Dorsolateral prefrontal cortex (tissue), 120 donors: ENCODE measurements at regions of chr1 and their contacts with region 1.

Region 1: DNA sequence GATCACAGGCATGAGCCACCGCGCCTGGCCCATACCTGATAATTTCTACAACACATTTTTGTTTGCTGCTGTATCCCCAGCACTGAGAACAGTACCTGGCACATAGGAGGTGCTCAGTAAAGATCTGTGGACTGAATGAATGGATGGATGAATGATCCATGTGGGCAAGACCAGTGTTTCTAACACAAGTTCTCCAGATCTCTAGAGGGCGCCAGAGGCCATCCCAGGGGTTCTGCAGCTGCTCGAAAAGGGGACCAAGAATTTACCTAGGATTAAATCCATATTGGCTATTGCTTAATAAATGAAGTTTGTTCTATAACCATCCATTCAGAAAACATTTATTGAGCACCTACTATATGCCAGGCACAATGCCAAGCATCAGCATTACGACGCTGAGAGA is 167.7 kb downstream of the ACTL8 start:
- DNase-seq: peak in 8 of 10 donors; percentile 34 to 80 (median 58)
- H3K4me3 ChIP-seq: no peak overlapping the region
- H3K27ac ChIP-seq: no peak overlapping the region
- H3K27me3 ChIP-seq: peaks cover 0 to 45% (median 3%) of the 10 kb centered on the region in 45 donors
- CTCF ChIP-seq: peak in 54 of 56 donors; percentile 30 to 71 (median 55)

Region 2: DNA sequence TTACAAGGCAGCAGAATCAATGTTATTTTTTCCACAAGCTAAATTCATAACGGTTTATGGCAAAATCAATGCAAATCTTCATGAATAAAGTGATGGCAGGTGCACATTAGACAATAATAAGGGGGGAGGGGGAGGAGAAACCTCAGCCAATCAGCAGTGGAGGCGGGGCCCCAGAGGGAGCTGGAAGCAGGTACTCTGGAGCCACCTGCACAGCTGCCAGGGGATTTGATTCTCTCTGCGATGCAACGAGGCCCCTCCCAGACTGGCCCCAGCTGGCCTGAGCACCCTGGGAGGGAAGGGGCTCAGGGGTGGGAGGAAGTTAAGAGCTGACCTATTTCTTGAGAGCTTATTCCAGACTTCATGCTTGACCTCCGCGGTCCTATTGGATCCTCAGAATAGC is 57.0 kb after region 1 on chr1:
- intact Hi-C with region 1: no loop called
- DNase-seq: no peak
- H3K4me3 ChIP-seq: no peak overlapping the region
- H3K27ac ChIP-seq: no peak overlapping the region
- H3K27me3 ChIP-seq: peaks cover 0 to 5% (median 0%) of the 10 kb centered on the region in 45 donors
- CTCF ChIP-seq: no peak

Region 3: DNA sequence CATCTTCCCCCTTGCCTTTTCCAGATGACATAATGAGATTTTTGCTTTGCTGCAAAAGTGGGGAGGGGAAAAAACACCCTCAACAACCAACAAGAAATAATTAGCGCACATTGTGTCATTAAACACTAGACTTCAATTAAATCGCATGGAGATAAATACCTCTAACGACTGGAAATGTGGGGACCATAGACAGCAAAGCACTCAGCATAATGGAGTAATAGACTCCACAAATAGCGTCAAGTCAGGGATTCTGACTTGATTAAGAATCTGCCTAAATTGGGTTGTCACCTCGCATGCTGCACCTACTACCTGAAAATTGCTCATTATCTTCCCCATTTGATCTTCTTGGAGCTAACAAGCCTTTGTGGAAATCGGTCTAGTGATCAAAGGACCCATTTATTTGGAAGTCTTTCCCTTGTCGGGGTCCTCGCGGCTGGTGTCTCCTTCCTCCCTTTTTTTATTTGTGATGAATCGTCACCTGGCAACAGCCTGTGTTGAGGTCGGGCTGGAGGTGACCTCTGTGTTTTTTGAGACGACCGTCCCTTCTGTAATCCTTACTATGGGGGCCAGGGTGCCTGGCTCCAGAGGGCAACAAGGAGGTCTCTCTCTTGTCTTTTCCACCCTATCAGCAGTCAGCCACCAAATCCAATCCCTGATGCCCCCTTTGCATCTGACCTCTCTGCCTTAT is 109.5 kb after region 1 on chr1:
- intact Hi-C with region 1: no loop called
- DNase-seq: no peak
- H3K4me3 ChIP-seq: no peak overlapping the region
- H3K27ac ChIP-seq: no peak overlapping the region
- H3K27me3 ChIP-seq: peaks cover 0 to 17% (median 0%) of the 10 kb centered on the region in 45 donors
- CTCF ChIP-seq: no peak

Region 4: DNA sequence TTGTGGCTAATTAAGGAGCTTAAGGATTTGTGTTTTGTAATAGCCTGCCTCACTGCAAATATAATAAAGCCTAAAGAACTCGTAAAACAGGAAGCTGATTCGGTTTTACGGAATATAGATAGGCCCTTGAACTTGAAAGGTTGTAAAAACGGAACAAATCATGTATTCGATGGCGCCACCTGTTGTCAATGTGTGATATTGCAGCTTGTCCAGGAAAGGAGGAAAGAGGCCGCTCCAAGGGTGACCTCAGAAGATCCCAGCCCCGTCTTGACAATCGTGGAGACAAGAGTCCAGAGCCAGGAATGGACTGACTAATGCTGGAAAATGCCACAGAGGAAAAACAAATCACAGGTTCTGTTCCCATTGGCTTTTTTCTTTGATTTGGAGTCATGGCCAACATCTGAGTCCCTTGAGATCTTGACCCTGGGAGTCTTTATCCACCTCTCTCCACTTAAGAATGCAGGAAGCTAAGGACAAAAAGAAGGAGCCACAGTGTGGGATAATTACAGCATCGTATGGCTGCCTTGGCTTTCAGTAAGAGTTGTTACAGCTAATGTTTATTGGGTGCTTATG is 177.7 kb after region 1 on chr1:
- intact Hi-C with region 1: loop called (anchors 5 kb)
- DNase-seq: peak in 8 of 10 donors; percentile 30 to 84 (median 69)
- H3K4me3 ChIP-seq: no peak overlapping the region
- H3K27ac ChIP-seq: no peak overlapping the region
- H3K27me3 ChIP-seq: peaks cover 0 to 4% (median 0%) of the 10 kb centered on the region in 45 donors
- CTCF ChIP-seq: peak; percentile 61 to 92 (median 85)

Region 5: GRCh38 chr1:18234790-18235242 is 312.0 kb after region 1 on chr1:
- intact Hi-C with region 1: loop called in 1 of 2 experiments (anchors 5 kb)
- DNase-seq: peak in 5 of 10 donors; percentile 39 to 64 (median 43)
- H3K4me3 ChIP-seq: no peak overlapping the region
- H3K27ac ChIP-seq: no peak overlapping the region
- H3K27me3 ChIP-seq: no peaks in the 10 kb centered on the region
- CTCF ChIP-seq: peak; percentile 48 to 90 (median 77)

Region 6: GRCh38 chr1:18581420-18581880 is 658.6 kb after region 1 on chr1:
- intact Hi-C with region 1: loop called in 1 of 2 experiments (anchors 10 kb)
- DNase-seq: peak in 7 of 10 donors; percentile 30 to 74 (median 44)
- H3K4me3 ChIP-seq: no peak overlapping the region
- H3K27ac ChIP-seq: peak overlapping the region in 1 of 59 donors; percentile 45
- H3K27me3 ChIP-seq: peaks cover 0 to 8% (median 0%) of the 10 kb centered on the region in 45 donors
- CTCF ChIP-seq: peak; percentile 28 to 83 (median 70)